Activated naive CD4-positive, alpha-beta T cell treated with anti-CD3 and anti-CD28 coated beads, Interleukin-2, amount 10 ng/mL, durations not matched to agents 7 days and 5 days (primary cell): ENCODE measurements at regions of chr7 and their contacts with region 1.

Region 1: GRCh38 chr7:1175967-1176851 is 16.2 kb upstream of the ZFAND2A start:
- DNase-seq: peak; percentile 88
- H3K4me3 Mint-ChIP-seq: peak overlapping the region; percentile 31
- H3K27ac Mint-ChIP-seq: peak overlapping the region; percentile 80
- H3K4me1 Mint-ChIP-seq: peaks cover 17% of the 10 kb centered on the region
- H3K27me3 Mint-ChIP-seq: peaks cover 26% of the 10 kb centered on the region

Region 2: DNA sequence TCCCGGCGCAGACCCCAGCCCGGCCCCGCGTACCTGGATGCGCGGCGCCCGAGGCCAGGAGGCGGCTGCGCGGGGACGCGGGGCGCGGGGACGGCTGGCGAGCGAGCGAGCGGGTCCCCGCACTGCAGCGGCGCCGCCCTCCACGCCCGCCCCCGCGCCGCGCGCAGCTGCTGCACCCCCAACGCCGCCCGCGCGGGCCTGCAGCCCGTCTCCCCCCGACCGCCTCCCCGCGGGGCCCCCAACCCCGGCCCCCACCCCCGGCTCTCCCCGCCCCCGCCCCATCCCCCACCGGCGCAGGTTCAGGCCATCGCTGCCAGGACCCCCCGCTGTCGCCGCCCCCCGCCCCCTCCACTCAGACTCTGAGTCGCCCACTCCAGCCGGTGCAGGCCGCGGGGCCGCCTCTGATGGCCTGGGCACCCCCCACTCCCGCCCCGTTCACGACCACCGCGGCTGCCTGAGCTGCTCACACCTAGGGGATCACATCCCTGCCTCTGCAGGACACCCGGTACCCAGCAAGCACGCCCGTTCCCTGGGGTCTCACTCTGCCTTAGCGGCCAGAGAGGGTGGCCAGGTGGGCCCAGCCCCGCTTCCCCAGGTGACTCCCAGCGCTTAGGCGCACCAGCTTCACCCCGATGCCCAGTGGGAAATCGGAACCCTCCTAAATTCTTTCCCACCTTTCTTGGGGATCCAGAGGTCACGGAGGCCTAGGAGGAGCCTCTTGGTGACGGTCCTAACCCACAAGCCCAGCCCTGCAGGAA is 463.6 kb before region 1 on chr7:
- CTCF ChIA-PET with region 1: no interaction called
- DNase-seq: peak; percentile 28
- H3K4me3 Mint-ChIP-seq: peak overlapping the region; percentile 47
- H3K27ac Mint-ChIP-seq: no peak overlapping the region
- H3K4me1 Mint-ChIP-seq: peaks cover 10% of the 10 kb centered on the region
- H3K27me3 Mint-ChIP-seq: peaks cover 18% of the 10 kb centered on the region

Region 3: DNA sequence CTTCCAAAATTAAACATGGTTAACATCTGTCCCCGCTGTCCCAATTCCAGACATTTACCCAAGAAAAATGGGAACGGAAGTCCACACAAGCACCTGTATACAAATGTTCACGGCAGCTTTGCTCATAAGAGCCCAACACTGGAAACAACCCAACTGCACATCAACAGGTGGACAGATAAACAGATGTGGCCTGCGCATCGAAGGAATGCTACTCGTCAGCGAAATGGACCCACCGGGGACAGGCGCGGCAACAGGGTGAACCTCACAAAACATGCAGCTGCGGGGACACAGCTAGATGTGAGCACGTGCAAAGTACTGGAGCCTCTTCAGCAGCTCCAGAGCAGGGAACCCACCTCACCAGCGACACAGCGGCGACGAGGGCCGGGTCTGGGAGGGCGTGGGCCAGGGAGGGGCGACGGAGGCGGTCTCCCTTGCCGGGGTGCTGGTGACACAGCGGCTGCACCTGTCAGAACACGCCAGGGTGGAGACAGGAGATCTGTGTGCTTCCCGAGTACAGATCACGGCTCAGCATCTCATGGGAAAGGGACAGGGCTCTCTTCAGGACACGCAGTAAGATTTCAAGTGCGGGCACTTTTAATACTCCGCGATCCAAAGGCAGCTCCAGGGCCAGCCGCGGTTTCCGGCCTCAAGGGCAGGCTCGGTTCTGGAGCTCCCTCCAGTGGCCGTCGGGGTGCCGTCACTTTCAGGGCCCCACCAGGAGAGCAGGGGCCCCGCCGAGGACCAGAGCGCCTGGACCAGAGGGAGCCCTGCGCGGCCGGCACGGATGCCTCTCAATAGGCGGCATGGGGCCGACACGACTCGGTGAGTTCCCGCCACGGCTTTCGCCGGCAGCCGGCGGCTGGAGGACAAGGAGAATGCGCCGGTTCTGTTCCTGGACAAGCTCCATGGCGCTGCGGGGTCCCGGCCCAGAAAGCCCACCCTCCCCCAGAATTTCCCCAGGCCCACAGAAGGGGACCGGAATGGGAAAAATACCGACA is 110.6 kb before region 1 on chr7:
- CTCF ChIA-PET with region 1: interaction called, 20 read pairs
- DNase-seq: peak; percentile 91
- H3K4me3 Mint-ChIP-seq: peak overlapping the region; percentile 28
- H3K27ac Mint-ChIP-seq: no peak overlapping the region
- H3K4me1 Mint-ChIP-seq: peaks cover 7% of the 10 kb centered on the region
- H3K27me3 Mint-ChIP-seq: peaks cover 26% of the 10 kb centered on the region

Region 4: DNA sequence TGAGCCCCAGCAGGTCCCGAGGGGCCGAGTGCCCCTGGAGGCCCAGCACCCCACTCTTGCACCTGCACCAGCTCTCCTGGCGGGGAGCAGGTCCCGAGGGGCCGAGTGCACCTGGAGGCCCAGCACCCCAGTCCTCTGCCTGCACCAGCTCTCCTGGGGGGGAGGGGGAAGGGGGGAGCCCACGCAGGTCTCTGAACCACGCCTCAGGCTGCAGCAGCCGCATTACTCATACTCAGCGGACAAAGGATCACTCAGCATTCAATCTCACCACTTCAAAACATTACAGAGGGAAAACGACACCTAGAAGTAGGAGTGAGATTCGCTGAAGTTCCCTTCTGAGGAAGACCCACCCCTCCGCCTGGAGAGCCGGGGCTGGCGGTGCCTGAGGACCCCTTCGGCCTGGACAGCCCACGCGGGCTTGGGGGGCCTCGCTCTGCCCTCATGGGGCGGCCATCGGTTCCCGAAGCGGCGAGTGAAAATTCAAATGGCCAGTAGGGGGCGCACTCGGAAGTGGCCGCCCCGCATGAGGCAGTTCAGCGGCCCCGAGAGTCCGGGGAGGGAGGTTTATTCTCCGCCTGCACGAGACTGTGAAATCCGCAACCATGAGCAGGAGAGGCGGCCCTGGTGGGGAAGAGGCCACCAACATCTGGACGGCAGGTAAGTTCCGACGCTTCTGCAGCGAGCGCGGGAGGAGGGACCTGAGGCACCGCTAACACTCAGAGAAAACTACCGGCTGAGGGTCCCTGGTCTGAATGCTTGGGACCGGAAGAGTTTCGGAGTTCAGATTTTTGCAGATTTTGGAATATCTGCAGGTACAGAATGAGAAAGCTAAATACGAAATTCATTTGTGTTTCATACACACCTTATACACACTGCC is 89.4 kb before region 1 on chr7:
- CTCF ChIA-PET with region 1: interaction called, 19 read pairs
- DNase-seq: peak; percentile 82
- H3K4me3 Mint-ChIP-seq: peak overlapping the region; percentile 64
- H3K27ac Mint-ChIP-seq: no peak overlapping the region
- H3K4me1 Mint-ChIP-seq: peaks cover 13% of the 10 kb centered on the region
- H3K27me3 Mint-ChIP-seq: peaks cover 5% of the 10 kb centered on the region

Region 5: DNA sequence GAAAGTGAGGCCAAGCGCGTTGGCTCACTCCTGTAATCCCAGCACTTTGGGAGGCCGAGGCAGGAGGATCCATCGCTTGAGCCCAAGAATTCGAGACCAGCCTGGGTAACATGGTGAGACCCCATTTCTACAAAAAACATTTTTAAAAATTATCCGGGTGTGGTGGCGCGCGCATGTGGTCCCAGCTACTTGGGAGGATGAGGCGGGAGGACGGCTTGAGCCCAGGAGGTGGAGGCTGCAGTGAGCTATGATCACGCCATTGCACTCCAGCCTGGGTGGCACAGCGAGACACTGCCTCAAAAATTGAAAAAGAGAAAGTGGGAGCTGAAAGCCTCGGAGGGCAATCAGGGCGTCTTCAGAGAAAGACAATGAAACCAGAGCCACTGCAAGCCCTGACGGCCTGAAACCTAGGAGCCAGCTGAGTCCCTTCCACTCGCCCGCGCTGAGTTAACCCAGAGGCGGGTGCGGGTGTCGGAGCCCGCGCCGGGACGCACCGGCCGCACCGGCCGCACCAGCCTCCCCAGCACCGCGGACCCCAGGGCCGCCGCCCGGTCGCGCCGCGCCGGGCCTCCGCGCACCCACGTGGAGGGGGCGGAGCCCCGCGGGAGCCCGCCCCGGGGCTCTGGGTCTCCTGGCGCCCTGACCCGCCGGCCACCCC is 38.6 kb before region 1 on chr7:
- CTCF ChIA-PET with region 1: interaction called, 18 read pairs
- DNase-seq: no peak
- H3K4me3 Mint-ChIP-seq: peak overlapping the region; percentile 87
- H3K27ac Mint-ChIP-seq: peak overlapping the region; percentile 83
- H3K4me1 Mint-ChIP-seq: peaks cover 16% of the 10 kb centered on the region
- H3K27me3 Mint-ChIP-seq: peaks cover 1% of the 10 kb centered on the region

Region 6: GRCh38 chr7:1187127-1187526 is 10.9 kb after region 1 on chr7:
- CTCF ChIA-PET with region 1: interaction called, 40 read pairs
- DNase-seq: no peak
- H3K4me3 Mint-ChIP-seq: no peak overlapping the region
- H3K27ac Mint-ChIP-seq: no peak overlapping the region
- H3K4me1 Mint-ChIP-seq: peaks cover 15% of the 10 kb centered on the region
- H3K27me3 Mint-ChIP-seq: peaks cover 52% of the 10 kb centered on the region